ENCODE measurements at regions of chr1 and their contacts with region 1.

Region 1: DNA sequence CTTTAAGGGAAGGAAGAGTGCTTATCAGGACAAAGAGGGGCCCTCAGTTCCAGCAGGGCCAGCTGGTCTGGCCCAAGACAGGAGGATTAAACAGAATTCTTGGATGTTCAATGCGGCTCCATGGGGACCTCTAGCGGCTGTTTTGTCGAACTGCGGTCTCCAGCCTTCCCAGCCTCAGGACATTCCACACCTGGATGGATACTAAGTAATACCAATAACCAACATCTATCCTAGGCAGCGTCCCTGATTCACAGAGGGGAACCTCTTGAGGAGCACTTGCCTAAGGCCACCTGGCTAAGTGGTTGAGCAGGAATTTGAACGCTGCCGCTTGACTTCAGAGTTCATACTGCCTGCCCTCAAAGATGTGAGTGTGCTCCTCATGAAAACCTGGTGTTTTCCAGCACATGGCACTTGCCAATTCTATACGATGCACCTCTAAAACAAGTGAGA is 15.5 kb upstream of the CD247 start:
- DNase-seq: peak; percentile 86 to 88 (median 87)
- ATAC-seq: peak; percentile 94
- H3K4me3 ChIP-seq: no peak overlapping the region
- H3K27ac ChIP-seq: no peak overlapping the region
- H3K4me1 ChIP-seq: no peaks in the 10 kb centered on the region; a peak in 2 of 5 replicates
- H3K27me3 ChIP-seq: peaks cover 0 to 8% of the 10 kb centered on the region in 2 experiments; a peak in 1 of 5 replicates
- CTCF ChIP-seq: peak; percentile 88 to 97 (median 96)
- EP300 ChIP-seq: no peak
- POLR2A ChIP-seq: no peak
- RAD21 ChIP-seq: peak; percentile 92 to 95

Region 2: DNA sequence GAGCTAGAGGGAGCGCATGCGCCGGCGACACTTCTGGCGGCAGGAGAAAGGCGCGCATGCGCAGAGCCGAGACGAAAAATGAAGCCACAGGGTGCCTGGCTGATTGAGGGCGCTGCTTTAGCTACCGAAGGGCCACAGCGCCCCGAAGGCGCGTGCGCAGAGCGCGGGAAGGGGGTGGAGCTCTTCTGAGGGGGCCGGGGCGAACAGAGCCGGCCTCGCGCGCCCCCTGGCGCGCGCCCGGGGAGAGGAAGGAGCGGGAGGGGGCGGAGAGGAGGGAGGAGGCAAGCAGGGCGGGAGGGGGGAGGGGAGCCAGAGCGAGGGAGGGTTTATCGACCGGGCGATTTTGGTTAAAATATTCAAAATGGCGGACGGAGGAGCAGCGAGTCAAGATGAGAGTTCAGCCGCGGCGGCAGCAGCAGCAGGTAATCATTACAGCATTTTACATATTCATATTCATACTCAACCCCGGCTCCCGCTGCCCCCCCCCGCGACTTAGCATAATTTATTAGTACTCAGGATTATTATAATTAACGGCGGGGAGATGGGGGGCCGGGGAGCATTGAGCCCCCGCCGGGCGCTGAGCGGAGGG is 313.2 kb before region 1 on chr1 and contains the start of gene POU2F1:
- CTCF ChIA-PET with region 1: no interaction called
- POLR2A ChIA-PET with region 1: interaction called, 3 read pairs
- in situ Hi-C with region 1: no loop called
- intact Hi-C with region 1: loop called (anchors 1 kb)
- DNase-seq: peak; percentile 96 to 99 (median 97)
- ATAC-seq: peak; percentile 82
- H3K4me3 ChIP-seq: peak within 1 kb of the TSS; percentile 69
- H3K27ac ChIP-seq: peak within 1 kb of the TSS; percentile 95
- H3K4me1 ChIP-seq: peaks cover 17 to 26% of the 10 kb centered on the region in 2 experiments; a peak in 4 of 5 replicates
- H3K27me3 ChIP-seq: no peaks in the 10 kb centered on the region
- CTCF ChIP-seq: peak; percentile 62 to 93 (median 93)
- EP300 ChIP-seq: no peak
- POLR2A ChIP-seq: no peak; the same call in none of the 2 replicates
- RAD21 ChIP-seq: peak; percentile 48 to 59
- polyA plus RNA-seq, gene POU2F1: 2.6 to 6.0 TPM

Region 3: DNA sequence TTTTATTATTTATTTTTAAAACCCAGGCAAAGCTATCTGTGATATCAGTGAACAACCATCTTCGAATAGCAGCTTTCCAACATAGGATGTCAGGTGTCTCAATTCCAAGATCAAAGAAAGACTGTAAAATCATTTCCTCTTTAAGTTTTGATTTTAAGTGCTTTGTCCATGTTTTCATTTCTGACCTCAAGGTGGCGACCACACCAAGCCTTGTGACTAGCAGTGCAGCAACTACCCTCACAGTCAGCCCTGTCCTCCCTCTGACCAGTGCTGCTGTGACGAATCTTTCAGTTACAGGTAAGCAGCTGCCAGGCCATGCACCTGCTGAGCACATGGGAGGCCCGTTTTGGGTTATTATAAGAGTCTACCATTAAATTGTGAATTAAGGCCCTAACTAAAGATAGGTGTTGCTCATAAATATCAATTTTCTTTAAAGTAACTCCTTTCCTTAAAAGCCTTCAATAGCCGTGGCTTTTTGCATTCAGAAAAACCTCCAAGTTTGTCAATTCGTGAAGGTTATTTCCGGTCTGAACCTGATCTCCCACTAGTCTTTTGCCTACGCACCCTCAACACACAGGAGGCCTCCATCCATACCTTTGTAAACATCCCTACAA is 132.5 kb before region 1 on chr1:
- CTCF ChIA-PET with region 1: interaction called, 12 read pairs
- POLR2A ChIA-PET with region 1: no interaction called
- in situ Hi-C with region 1: no loop called
- intact Hi-C with region 1: loop called (anchors 1 kb)
- DNase-seq: peak; percentile 38 to 78 (median 58)
- ATAC-seq: peak; percentile 99
- H3K4me3 ChIP-seq: no peak overlapping the region
- H3K27ac ChIP-seq: no peak overlapping the region
- H3K4me1 ChIP-seq: no peaks in the 10 kb centered on the region
- H3K27me3 ChIP-seq: no peaks in the 10 kb centered on the region
- CTCF ChIP-seq: peak; percentile 75 to 91 (median 86)
- EP300 ChIP-seq: no peak
- POLR2A ChIP-seq: no peak
- RAD21 ChIP-seq: peak; percentile 89

Region 4: GRCh38 chr1:167447521-167448136 is 86.2 kb before region 1 on chr1:
- CTCF ChIA-PET with region 1: no interaction called
- POLR2A ChIA-PET with region 1: no interaction called
- in situ Hi-C with region 1: loop called (anchors 5 kb)
- intact Hi-C with region 1: loop called (anchors 1 kb)
- DNase-seq: peak in 3 of 4 experiments; percentile 16 to 47 (median 43)
- ATAC-seq: peak; percentile 77
- H3K4me3 ChIP-seq: 0 out of 2 replicates have a peak overlapping the region, but pooled peaks have one; percentile 7
- H3K27ac ChIP-seq: no peak overlapping the region
- H3K4me1 ChIP-seq: peaks cover 0 to 16% of the 10 kb centered on the region in 2 experiments; a peak in 4 of 5 replicates
- H3K27me3 ChIP-seq: peaks cover 14 to 24% of the 10 kb centered on the region in 2 experiments
- CTCF ChIP-seq: no peak
- EP300 ChIP-seq: no peak
- POLR2A ChIP-seq: no peak
- RAD21 ChIP-seq: no peak

Region 5: GRCh38 chr1:167460836-167461235 is 73.0 kb before region 1 on chr1:
- CTCF ChIA-PET with region 1: no interaction called
- POLR2A ChIA-PET with region 1: interaction called, 3 read pairs
- in situ Hi-C with region 1: no loop called
- intact Hi-C with region 1: loop called (anchors 5 kb)
- DNase-seq: no peak
- ATAC-seq: no peak
- H3K4me3 ChIP-seq: no peak overlapping the region
- H3K27ac ChIP-seq: no peak overlapping the region
- H3K4me1 ChIP-seq: peaks cover 3 to 7% of the 10 kb centered on the region in 2 experiments; a peak in 4 of 5 replicates
- H3K27me3 ChIP-seq: peaks cover 31 to 51% of the 10 kb centered on the region in 2 experiments
- CTCF ChIP-seq: no peak
- EP300 ChIP-seq: no peak
- POLR2A ChIP-seq: no peak
- RAD21 ChIP-seq: no peak